ENCODE measurements at regions of chr3 and their contacts with region 1.

Region 1: GRCh38 chr3:46400000-46400734 is 6.7 kb downstream of the CCR5AS start:
- DNase-seq: no peak
- H3K4me3 ChIP-seq: no peak overlapping the region
- CTCF ChIP-seq: no peak

Region 2: GRCh38 chr3:45972534-45973402 is 427.4 kb before region 1 on chr3:
- in situ Hi-C with region 1: no loop called
- DNase-seq: peak; percentile 78
- H3K4me3 ChIP-seq: no peak overlapping the region
- CTCF ChIP-seq: no peak

Region 3: GRCh38 chr3:46368569-46368968 is 31.6 kb before region 1 on chr3:
- in situ Hi-C with region 1: loop called (anchors 5 kb)
- DNase-seq: no peak
- H3K4me3 ChIP-seq: no peak overlapping the region
- CTCF ChIP-seq: no peak

Region 4: GRCh38 chr3:46469680-46470357 is 69.7 kb after region 1 on chr3:
- in situ Hi-C with region 1: no loop called
- DNase-seq: no peak
- H3K4me3 ChIP-seq: no peak overlapping the region
- CTCF ChIP-seq: no peak